Mucosa of descending colon (tissue), 3 donors: ENCODE measurements at regions of chr16 and their contacts with region 1.

Region 1: DNA sequence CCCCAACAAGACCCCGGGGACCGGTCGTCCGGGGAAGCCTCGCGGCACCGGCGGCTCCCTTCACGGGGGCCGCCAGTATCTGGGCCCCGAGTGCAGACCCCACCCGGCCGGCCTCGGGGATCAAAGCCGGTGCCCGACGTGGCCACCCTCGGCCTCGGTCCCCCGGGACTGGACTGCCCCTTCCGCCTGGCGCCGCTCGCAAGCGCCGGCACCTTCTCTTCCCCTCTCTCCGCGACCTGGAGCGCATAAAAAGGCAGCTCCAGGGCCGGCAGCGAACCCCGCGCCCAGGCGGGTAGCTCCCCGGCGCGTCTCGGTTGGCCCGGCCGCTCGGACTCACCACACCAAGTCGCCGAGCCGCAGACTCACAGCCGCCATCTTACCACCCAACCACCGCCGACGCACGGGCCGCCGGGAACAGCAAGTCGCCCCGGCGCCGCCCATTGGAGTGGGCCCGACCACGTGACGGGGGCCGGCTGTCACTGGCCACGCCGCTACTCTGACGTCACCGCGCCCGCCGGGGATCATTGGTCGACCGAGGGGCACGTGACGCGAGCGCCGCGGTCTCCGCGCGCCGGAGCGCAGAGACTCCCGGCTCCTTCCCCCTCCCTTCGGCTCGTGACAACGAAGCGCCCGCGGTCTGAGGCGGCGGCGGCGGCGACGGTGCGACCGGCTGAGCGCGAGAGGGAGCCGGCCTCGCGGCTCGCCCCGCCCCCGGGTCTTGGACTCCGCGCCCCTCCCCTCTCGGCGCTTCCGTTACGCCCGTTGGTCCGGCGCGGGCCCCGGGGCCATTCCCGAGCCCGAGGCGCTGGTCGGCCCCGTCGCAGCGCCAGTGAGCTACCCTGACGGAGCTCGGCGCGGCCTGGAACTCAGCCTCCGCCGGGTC is at the starts of genes GLYR1 and UBN1:
- DNase-seq: peak; percentile 100
- ATAC-seq: peak; percentile 90
- H3K4me3 ChIP-seq: peak within 1 kb of the TSS; percentile 98
- H3K4me1 ChIP-seq: peaks cover 47% of the 10 kb centered on the region
- CTCF ChIP-seq: no peak
- total RNA-seq, gene GLYR1: 110 to 123 (median 111) TPM
- total RNA-seq, gene UBN1: 41.3 to 42.7 (median 41.6) TPM

Region 2: DNA sequence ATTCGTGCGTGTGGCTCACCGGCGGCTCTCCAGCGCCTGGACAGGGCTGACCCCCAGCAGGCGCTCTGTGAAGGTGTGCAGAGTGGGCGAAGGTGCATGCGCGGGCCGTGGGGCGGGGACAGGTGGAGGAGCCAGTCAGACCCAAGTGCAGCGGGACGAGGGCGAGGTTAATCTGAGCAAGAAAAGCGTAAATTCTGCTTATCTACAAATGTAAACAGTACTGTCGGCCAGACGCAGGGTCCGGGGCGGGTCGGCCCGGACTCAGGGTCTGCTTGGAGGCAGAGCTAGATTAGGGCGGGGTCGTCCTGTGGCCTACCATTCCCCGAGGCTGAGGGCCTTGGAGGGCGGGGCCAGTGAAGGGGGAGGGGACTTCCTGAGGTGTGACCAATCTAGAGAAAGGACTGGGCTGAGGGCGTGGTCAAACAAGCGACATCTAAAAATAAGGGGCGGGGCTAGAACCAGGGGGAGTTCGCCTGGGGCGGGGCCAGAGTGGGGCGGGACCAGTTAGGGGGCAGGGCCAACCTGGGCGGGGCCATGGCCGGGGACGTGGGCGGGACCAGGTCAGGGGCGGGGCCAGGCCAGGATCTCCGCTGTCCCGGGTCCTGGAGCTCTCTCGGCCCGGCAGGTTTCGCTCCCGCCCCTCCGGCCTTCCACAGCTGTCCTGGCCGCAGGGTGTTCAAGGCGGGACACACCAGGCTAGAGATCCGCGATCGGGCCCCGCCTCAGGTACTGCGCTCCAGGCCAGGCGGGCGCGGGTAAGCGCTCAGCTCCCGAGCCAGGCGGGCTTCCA is 110.8 kb after region 1 on chr16 and contains the start of gene SEC14L5:
- intact Hi-C with region 1: loop called in 1 of 2 experiments (anchors 10 kb)
- DNase-seq: peak; percentile 97 to 100 (median 99)
- ATAC-seq: peak; percentile 94
- H3K4me3 ChIP-seq: no peak within 1 kb of the TSS
- H3K4me1 ChIP-seq: peaks cover 4% of the 10 kb centered on the region
- CTCF ChIP-seq: no peak
- total RNA-seq, gene SEC14L5: 1.3 to 1.6 (median 1.4) TPM